ENCODE measurements at regions of chr3 and their contacts with region 1.

Region 1: GRCh38 chr3:18250991-18251390 is 174.1 kb downstream of the SATB1 start:
- DNase-seq: no peak
- H3K4me3 ChIP-seq: no peak overlapping the region
- H3K27ac ChIP-seq: no peak overlapping the region
- H3K4me1 ChIP-seq: no peaks in the 10 kb centered on the region
- CTCF ChIP-seq: no peak

Region 2: GRCh38 chr3:18264361-18264760 is 13.4 kb after region 1 on chr3:
- CTCF ChIA-PET with region 1: no interaction called
- POLR2A ChIA-PET with region 1: interaction called, 10 read pairs
- intact Hi-C with region 1: no loop called
- DNase-seq: no peak
- H3K4me3 ChIP-seq: no peak overlapping the region
- H3K27ac ChIP-seq: no peak overlapping the region
- H3K4me1 ChIP-seq: no peaks in the 10 kb centered on the region
- CTCF ChIP-seq: no peak

Region 3: DNA sequence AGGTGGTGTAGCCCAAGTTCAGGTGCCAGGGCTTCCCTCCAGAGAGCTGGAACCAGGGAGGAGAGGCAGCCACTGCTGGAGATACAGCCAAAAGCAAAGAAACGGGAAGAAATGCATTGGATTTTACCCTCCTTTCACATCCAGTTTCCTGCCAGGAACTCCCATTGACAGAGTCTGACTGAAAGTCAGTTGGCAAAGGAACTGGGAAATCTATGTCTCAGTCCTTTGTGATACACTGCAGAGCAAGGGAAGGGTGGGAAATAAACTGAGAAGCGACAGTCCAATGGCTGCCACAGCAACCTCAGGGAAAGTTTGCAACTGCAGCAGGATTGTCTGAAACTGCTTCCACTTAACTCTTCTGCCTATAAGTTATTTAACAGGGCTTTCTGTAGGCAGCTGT is 31.5 kb after region 1 on chr3:
- CTCF ChIA-PET with region 1: no interaction called
- POLR2A ChIA-PET with region 1: no interaction called
- intact Hi-C with region 1: no loop called
- DNase-seq: no peak
- H3K4me3 ChIP-seq: no peak overlapping the region
- H3K27ac ChIP-seq: no peak overlapping the region
- H3K4me1 ChIP-seq: no peaks in the 10 kb centered on the region
- CTCF ChIP-seq: no peak

Region 4: DNA sequence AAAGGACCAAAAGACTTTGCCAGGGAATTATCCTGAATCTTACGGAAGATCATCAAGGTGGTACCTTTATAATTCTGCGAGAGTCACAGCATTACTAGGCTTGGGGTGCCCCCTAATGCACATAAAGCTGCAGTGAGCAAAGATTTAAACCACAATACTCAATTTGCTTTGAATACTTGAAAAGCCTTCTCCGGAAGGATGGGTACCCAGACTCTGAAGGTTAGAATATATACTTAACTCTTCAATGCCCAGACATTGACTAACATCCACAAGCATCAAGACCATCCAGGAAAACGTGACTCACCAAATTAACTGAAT is 779.5 kb after region 1 on chr3:
- CTCF ChIA-PET with region 1: no interaction called
- POLR2A ChIA-PET with region 1: no interaction called
- intact Hi-C with region 1: no loop called
- DNase-seq: peak; percentile 13
- H3K4me3 ChIP-seq: no peak overlapping the region
- H3K27ac ChIP-seq: no peak overlapping the region
- H3K4me1 ChIP-seq: no peaks in the 10 kb centered on the region
- CTCF ChIP-seq: peak; percentile 69

Measured in OCI-LY7 (cell line).